IMR-90 (cell line): ENCODE measurements at regions of chr9 and their contacts with region 1.

Region 1: DNA sequence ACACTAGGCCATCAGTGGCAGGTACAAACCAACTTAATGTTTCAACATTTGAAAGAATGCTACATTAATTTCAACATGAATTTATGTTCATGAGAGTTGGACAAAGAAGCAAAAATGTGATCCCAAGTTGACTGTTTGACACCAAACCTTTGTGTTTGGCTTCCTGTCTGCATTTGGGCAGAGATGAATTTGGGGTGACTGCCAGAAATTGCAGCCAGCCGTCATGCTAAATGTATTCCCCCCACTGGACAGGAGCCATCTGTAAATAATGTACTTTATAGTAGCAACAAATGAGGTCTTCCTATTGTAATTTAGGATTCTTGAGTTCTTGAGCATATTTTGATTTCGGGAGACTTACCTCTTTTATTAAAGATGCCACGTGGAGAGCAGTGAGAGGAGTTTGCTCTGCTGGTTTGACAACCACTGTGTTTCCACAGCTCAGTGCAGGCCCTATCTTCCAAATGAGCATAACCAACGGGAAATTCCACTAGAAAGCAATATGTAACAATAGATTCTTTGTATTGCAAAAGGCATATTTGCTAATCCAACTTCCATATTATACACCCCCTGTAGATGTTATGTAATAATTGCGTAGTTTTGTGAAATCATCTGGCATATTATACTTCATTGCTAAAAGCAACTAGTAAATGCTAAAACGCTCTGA is 27.6 kb downstream of the ALDH1A1 start:
- DNase-seq: no peak
- ATAC-seq: no peak
- H3K4me3 ChIP-seq: no peak overlapping the region
- H3K27ac ChIP-seq: no peak overlapping the region
- H3K4me1 ChIP-seq: no peaks in the 10 kb centered on the region
- H3K27me3 ChIP-seq: no peaks in the 10 kb centered on the region
- CTCF ChIP-seq: no peak
- POLR2A ChIP-seq: no peak
- RAD21 ChIP-seq: no peak

Region 2: DNA sequence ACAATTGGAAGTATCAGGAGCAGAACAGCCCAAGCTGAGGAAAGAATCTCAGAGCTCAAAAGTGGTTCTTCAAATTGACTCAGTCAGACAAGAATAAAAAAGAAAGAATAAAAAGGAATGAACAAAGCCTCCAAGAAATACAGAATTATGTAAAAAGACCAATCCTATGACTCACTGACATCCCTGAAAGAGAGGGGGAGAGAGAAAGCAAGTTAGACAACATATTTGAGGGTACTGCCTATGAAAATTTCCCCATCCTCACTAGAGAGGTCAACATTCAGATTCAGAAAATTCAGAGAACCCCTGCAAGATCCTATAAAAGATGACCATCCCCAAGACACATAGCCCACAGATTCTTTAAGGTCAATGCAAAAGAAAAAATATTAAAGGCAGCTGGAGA is 145.6 kb before region 1 on chr9:
- CTCF ChIA-PET with region 1: no interaction called
- POLR2A ChIA-PET with region 1: no interaction called
- dilution Hi-C with region 1: no loop called
- in situ Hi-C with region 1: no loop called
- intact Hi-C with region 1: no loop called
- DNase-seq: no peak
- ATAC-seq: no peak
- H3K4me3 ChIP-seq: no peak overlapping the region
- H3K27ac ChIP-seq: no peak overlapping the region
- H3K4me1 ChIP-seq: no peaks in the 10 kb centered on the region
- H3K27me3 ChIP-seq: no peaks in the 10 kb centered on the region; the same call in 1 of the 2 replicates
- CTCF ChIP-seq: no peak
- POLR2A ChIP-seq: no peak
- RAD21 ChIP-seq: no peak

Region 3: DNA sequence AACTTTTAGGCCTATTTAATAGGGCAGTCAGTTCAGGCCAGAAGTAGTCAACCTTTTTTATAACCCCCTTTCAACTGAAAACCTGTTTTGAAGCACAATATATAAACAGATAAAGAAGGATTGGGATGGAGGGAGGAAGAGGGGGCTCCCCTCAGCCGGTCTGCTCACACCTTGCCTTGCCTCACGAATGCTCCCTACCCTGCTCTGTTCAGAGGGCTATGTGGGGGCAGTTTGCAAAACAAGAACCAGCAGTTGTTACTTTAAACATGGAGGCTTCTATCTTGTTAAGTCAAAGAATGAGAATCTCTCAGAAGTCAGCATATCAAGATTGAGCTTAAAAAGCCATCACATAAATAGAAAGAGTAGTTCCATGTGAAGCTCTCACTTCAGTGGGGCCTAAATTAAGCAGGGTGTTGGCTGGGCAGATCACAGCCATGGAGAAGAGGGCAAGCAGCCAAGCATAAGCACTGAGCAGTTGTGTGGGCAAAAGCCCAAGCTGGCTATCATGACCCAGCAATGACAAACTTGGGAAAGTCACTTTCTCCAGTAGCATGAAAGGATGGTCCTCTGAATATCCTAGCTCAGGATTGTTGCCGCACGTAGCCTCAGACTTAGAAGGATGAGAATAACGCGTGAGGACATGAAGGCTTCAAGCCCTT is 43.0 kb before region 1 on chr9:
- CTCF ChIA-PET with region 1: no interaction called
- POLR2A ChIA-PET with region 1: interaction called, 11 read pairs
- dilution Hi-C with region 1: no loop called
- in situ Hi-C with region 1: no loop called
- intact Hi-C with region 1: no loop called
- DNase-seq: no peak
- ATAC-seq: no peak
- H3K4me3 ChIP-seq: no peak overlapping the region
- H3K27ac ChIP-seq: no peak overlapping the region
- H3K4me1 ChIP-seq: no peaks in the 10 kb centered on the region
- H3K27me3 ChIP-seq: no peaks in the 10 kb centered on the region
- CTCF ChIP-seq: no peak
- POLR2A ChIP-seq: no peak
- RAD21 ChIP-seq: no peak

Region 4: GRCh38 chr9:74493512-74493911 is 1568.3 kb after region 1 on chr9:
- CTCF ChIA-PET with region 1: no interaction called
- POLR2A ChIA-PET with region 1: no interaction called
- dilution Hi-C with region 1: no loop called
- in situ Hi-C with region 1: no loop called
- intact Hi-C with region 1: loop called (anchors 5 kb)
- DNase-seq: no peak
- ATAC-seq: no peak
- H3K4me3 ChIP-seq: no peak overlapping the region
- H3K27ac ChIP-seq: no peak overlapping the region
- H3K4me1 ChIP-seq: no peaks in the 10 kb centered on the region
- H3K27me3 ChIP-seq: peaks cover 10% of the 10 kb centered on the region; the same call in 1 of the 2 replicates
- CTCF ChIP-seq: no peak
- POLR2A ChIP-seq: no peak
- RAD21 ChIP-seq: no peak